Vagina (tissue), 2 donors: ENCODE measurements at regions of chr7 and their contacts with region 1.

Region 1: GRCh38 chr7:54090652-54091213 is 451.4 kb upstream of the VSTM2A start:
- DNase-seq: no peak
- H3K4me3 ChIP-seq: no peak overlapping the region
- H3K27ac ChIP-seq: no peak overlapping the region
- H3K4me1 ChIP-seq: no peaks in the 10 kb centered on the region
- H3K27me3 ChIP-seq: no peaks in the 10 kb centered on the region
- CTCF ChIP-seq: no peak
- POLR2A ChIP-seq: no peak

Region 2: GRCh38 chr7:54076616-54077015 is 14.1 kb before region 1 on chr7:
- intact Hi-C with region 1: loop called (anchors 1 kb)
- DNase-seq: no peak
- H3K4me3 ChIP-seq: no peak overlapping the region
- H3K27ac ChIP-seq: no peak overlapping the region
- H3K4me1 ChIP-seq: no peaks in the 10 kb centered on the region
- H3K27me3 ChIP-seq: no peaks in the 10 kb centered on the region
- CTCF ChIP-seq: no peak
- POLR2A ChIP-seq: no peak

Region 3: DNA sequence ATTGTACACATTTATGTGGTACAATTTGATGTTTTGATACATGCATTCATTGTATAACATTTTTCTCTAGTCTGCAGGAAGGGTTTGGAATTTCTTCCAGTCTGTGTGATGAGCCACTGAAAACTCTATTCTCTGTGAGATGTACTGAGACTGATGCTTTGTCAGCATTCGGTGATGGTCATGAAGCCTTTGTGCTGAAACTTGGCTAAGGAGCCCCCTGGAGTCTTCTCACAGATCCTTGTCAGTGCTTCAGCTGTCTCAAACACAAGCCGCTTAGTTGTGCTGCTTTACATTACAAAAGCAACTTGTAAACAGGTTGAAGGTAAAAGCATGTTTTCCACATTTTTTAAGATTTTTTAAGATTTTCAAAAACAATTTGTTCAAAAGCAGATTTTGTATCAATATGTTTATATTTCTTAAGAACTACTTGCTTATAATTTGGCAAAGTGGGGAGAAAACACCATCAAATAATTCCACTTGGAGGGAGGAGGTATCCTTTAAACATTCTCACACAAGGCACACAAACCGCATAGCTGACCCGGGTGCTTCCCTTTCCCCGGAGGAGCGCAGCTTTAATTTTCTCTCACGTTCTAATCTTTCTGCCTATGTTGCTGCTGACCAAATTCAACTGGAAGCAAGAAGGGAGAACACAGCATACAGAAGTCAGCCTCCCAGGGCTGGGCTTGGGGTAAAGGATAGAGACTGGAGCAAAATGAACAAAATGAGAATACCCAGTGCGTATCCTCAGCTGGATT is 201.6 kb after region 1 on chr7:
- intact Hi-C with region 1: no loop called
- DNase-seq: no peak
- H3K4me3 ChIP-seq: no peak overlapping the region
- H3K27ac ChIP-seq: no peak overlapping the region
- H3K4me1 ChIP-seq: no peaks in the 10 kb centered on the region
- H3K27me3 ChIP-seq: no peaks in the 10 kb centered on the region
- CTCF ChIP-seq: no peak
- POLR2A ChIP-seq: no peak